ENCODE measurements at regions of chr21 and their contacts with region 1.

Region 1: GRCh38 chr21:25396135-25396711 is 211.1 kb downstream of the MRPL39 start:
- DNase-seq: peak; percentile 58
- H3K4me3 Mint-ChIP-seq: peak overlapping the region; percentile 35
- H3K27ac Mint-ChIP-seq: peak overlapping the region; percentile 78
- H3K4me1 Mint-ChIP-seq: peaks cover 13% of the 10 kb centered on the region
- H3K27me3 Mint-ChIP-seq: no peaks in the 10 kb centered on the region

Region 2: DNA sequence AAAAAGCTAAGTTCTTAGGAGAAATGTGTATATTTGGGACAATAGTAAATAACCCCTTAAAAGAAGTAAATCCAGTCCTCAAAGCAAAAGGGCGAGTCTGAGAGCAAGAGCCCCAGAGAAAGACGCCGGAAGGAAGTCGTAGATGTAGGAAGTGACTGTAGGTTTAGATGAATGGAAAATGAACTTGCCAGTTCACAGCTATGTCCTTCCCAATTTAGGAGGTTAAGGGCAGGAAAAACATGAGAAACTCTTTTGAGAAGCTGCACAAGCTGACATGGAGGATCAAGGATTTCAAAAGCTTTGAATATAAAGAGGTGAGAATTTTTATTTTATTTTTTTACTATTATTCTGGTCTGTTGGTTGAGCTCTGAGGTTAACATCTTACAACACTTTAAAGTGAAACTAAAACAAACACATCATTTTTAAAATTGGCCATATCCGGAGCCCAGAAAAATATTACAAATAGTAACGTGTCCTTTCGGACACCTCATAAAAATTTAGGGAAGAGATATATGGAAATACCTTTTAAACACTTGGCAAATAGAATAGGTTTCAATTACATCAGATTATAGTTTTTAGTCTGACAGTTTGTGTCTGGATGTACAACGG is 967.5 kb before region 1 on chr21:
- intact Hi-C with region 1: loop called (anchors 5 kb)
- DNase-seq: peak; percentile 2
- H3K4me3 Mint-ChIP-seq: peak overlapping the region; percentile 90
- H3K27ac Mint-ChIP-seq: peak overlapping the region; percentile 88
- H3K4me1 Mint-ChIP-seq: peaks cover 22% of the 10 kb centered on the region
- H3K27me3 Mint-ChIP-seq: no peaks in the 10 kb centered on the region

Region 3: GRCh38 chr21:25421327-25422028 is 25.3 kb after region 1 on chr21:
- intact Hi-C with region 1: loop called (anchors 1 kb)
- DNase-seq: peak; percentile 60
- H3K4me3 Mint-ChIP-seq: peak overlapping the region; percentile 77
- H3K27ac Mint-ChIP-seq: peak overlapping the region; percentile 77
- H3K4me1 Mint-ChIP-seq: peaks cover 46% of the 10 kb centered on the region
- H3K27me3 Mint-ChIP-seq: peaks cover 2% of the 10 kb centered on the region

Region 4: DNA sequence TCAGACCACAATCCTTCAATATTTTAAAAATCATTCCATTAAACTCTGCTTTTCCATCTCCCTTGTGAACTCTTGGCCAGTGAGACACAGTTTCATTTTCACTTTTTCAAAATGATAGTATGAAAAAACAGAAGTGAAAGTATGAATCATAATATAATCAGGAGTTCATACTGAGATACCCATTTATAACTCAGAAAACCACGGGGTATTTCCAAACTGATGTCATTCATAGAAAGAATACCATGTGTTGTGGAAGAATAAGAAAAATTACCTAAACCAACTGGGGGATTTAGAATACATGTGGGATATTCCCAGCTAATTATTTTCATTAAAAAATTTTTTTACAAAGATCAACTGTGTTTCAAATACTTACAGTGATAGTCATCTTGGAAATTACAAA is 61.2 kb after region 1 on chr21:
- intact Hi-C with region 1: loop called (anchors 1 kb)
- DNase-seq: no peak
- H3K4me3 Mint-ChIP-seq: peak overlapping the region; percentile 61
- H3K27ac Mint-ChIP-seq: peak overlapping the region; percentile 88
- H3K4me1 Mint-ChIP-seq: peaks cover 71% of the 10 kb centered on the region
- H3K27me3 Mint-ChIP-seq: no peaks in the 10 kb centered on the region

Region 5: GRCh38 chr21:25487046-25487594 is 90.9 kb after region 1 on chr21:
- intact Hi-C with region 1: loop called (anchors 1 kb)
- DNase-seq: no peak
- H3K4me3 Mint-ChIP-seq: peak overlapping the region; percentile 47
- H3K27ac Mint-ChIP-seq: peak overlapping the region; percentile 85
- H3K4me1 Mint-ChIP-seq: peaks cover 60% of the 10 kb centered on the region
- H3K27me3 Mint-ChIP-seq: no peaks in the 10 kb centered on the region

Region 6: GRCh38 chr21:25509862-25510261 is 113.6 kb after region 1 on chr21:
- intact Hi-C with region 1: loop called (anchors 1 kb)
- DNase-seq: no peak
- H3K4me3 Mint-ChIP-seq: no peak overlapping the region
- H3K27ac Mint-ChIP-seq: peak overlapping the region; percentile 13
- H3K4me1 Mint-ChIP-seq: peaks cover 42% of the 10 kb centered on the region
- H3K27me3 Mint-ChIP-seq: no peaks in the 10 kb centered on the region

Region 7: GRCh38 chr21:25573409-25574206 is 177.4 kb after region 1 on chr21:
- intact Hi-C with region 1: loop called (anchors 1 kb)
- DNase-seq: peak; percentile 42
- H3K4me3 Mint-ChIP-seq: peak overlapping the region; percentile 83
- H3K27ac Mint-ChIP-seq: peak overlapping the region; percentile 97
- H3K4me1 Mint-ChIP-seq: peaks cover 83% of the 10 kb centered on the region
- H3K27me3 Mint-ChIP-seq: no peaks in the 10 kb centered on the region

Measured in activated T-helper 1 cell treated with anti-CD3 and anti-CD28 coated beads, Interleukin-12 subunit alpha, Interleukin-12 subunit beta, Interleukin-2, Interleukin-4 antibody, amounts not matched to agents 30 ng/mL and 10 ng/mL and 1 ng/mL, durations not matched to agents 14 hours and 24 hours and 36 hours (primary cell).